Heart left ventricle (tissue), 16 donors: ENCODE measurements at regions of chr16 and their contacts with region 1.

Region 1: GRCh38 chr16:85393674-85394483 is 219.2 kb upstream of the GSE1 start:
- DNase-seq: peak; percentile 62 to 85 (median 65)
- ATAC-seq: peak in 2 of 4 donors; percentile 24 to 48
- H3K4me3 ChIP-seq: no peak overlapping the region
- H3K27ac ChIP-seq: peak overlapping the region in 1 of 12 donors; percentile 87
- H3K4me1 ChIP-seq: peaks cover 8 to 41% (median 25%) of the 10 kb centered on the region in 12 donors
- H3K27me3 ChIP-seq: no peaks in the 10 kb centered on the region
- CTCF ChIP-seq: peak; percentile 79 to 92 (median 86)
- POLR2A ChIP-seq: no peak

Region 2: DNA sequence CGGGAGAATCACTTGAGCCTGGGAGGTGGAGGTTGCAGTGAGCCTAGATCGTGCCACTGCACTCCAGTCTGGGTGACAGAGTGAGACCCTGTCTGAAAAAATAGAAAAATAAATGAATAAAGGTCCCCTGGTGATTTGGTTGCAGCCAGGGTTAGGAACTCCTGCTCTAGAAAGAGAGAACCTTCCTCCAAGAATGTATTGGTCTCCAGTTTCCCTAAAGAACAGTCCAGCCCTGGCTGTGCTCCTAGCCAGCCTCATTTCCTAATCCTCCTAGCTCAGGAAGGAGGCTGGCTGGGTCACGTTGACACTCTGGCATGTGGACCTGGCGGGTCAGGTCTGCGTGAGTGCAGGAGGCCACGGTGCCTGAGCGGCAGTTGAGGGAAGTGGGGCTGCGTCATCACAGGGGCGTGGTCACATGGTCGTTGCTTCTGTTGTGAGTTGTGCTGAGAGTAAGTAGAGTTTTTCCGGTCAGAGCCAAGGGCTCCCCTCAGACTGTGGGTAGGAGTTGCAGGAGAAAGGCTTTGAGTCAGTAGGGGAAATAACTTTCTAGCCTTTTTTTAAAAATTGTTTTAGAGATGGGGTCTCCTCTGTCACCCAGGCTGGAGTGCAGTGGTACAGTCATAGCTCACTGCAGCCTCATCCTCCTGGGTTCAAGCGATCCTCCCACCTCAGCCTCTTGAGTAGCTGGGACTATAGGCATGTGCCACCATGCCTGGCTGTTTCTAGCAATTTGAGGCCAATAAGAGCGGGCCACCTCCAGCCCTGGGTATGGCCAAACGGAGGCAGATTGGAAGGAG is 87.7 kb before region 1 on chr16:
- intact Hi-C with region 1: loop called in 1 of 10 experiments (anchors 10 kb)
- DNase-seq: peak; percentile 79 to 91 (median 86)
- ATAC-seq: peak; percentile 47 to 85 (median 60)
- H3K4me3 ChIP-seq: no peak overlapping the region
- H3K27ac ChIP-seq: peak overlapping the region in 8 of 12 donors; percentile 20 to 71 (median 46)
- H3K4me1 ChIP-seq: peaks cover 7 to 78% (median 45%) of the 10 kb centered on the region in 12 donors
- H3K27me3 ChIP-seq: no peaks in the 10 kb centered on the region
- CTCF ChIP-seq: no peak
- POLR2A ChIP-seq: no peak

Region 3: DNA sequence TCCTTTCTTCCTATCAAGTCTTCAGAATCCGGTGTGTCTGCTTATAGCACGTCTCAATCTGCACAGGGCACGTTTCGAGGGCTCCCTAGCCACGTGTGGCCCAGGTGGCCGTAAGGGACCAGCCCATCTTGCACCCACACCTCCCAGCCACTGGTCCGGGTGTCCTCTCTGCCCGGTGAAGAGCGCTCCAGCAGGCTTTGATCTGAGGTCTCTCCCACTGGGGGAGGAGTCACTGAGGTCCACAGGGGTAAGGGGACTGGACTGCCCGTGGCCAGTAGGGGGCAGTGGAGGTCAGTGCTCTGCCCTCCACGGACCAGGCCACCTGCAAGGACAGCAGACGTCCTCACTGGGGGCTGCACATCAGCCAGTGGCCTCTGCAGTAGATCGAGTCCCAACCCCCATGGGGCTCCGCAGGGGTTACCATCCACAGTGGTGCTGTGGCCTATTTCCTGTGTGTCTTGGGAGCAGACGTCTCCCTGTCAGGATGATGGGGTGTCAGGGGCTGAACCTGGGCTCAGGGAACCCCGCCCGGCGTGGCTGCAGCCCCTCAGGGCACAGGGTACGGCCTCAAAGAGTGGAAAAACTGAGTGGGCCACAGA is 77.5 kb before region 1 on chr16:
- intact Hi-C with region 1: loop called in 1 of 10 experiments (anchors 5 kb)
- DNase-seq: peak in 4 of 5 donors; percentile 51 to 67 (median 59)
- ATAC-seq: peak; percentile 73 to 80 (median 75)
- H3K4me3 ChIP-seq: no peak overlapping the region
- H3K27ac ChIP-seq: no peak overlapping the region
- H3K4me1 ChIP-seq: peaks cover 0 to 32% (median 18%) of the 10 kb centered on the region in 12 donors
- H3K27me3 ChIP-seq: no peaks in the 10 kb centered on the region
- CTCF ChIP-seq: peak; percentile 71 to 89 (median 79)
- POLR2A ChIP-seq: no peak

Region 4: GRCh38 chr16:85412911-85413520 is 19.1 kb after region 1 on chr16:
- intact Hi-C with region 1: loop called in 1 of 10 experiments (anchors 1 kb)
- DNase-seq: peak in 3 of 5 donors; percentile 7 to 46 (median 15)
- ATAC-seq: peak in 2 of 4 donors; percentile 11 to 21
- H3K4me3 ChIP-seq: no peak overlapping the region
- H3K27ac ChIP-seq: no peak overlapping the region
- H3K4me1 ChIP-seq: peaks cover 0 to 10% (median 2%) of the 10 kb centered on the region in 12 donors
- H3K27me3 ChIP-seq: no peaks in the 10 kb centered on the region
- CTCF ChIP-seq: no peak
- POLR2A ChIP-seq: no peak

Region 5: GRCh38 chr16:85479972-85480751 is 86.3 kb after region 1 on chr16:
- intact Hi-C with region 1: no loop called
- DNase-seq: no peak
- ATAC-seq: peak in 2 of 4 donors; percentile 36 to 38
- H3K4me3 ChIP-seq: no peak overlapping the region
- H3K27ac ChIP-seq: no peak overlapping the region
- H3K4me1 ChIP-seq: peaks cover 0 to 3% (median 0%) of the 10 kb centered on the region in 12 donors
- H3K27me3 ChIP-seq: no peaks in the 10 kb centered on the region
- CTCF ChIP-seq: peak in 10 of 12 donors; percentile 8 to 47 (median 26)
- POLR2A ChIP-seq: no peak